Mammary epithelial cell (primary cell): ENCODE measurements at regions of chr18 and their contacts with region 1.

Region 1: DNA sequence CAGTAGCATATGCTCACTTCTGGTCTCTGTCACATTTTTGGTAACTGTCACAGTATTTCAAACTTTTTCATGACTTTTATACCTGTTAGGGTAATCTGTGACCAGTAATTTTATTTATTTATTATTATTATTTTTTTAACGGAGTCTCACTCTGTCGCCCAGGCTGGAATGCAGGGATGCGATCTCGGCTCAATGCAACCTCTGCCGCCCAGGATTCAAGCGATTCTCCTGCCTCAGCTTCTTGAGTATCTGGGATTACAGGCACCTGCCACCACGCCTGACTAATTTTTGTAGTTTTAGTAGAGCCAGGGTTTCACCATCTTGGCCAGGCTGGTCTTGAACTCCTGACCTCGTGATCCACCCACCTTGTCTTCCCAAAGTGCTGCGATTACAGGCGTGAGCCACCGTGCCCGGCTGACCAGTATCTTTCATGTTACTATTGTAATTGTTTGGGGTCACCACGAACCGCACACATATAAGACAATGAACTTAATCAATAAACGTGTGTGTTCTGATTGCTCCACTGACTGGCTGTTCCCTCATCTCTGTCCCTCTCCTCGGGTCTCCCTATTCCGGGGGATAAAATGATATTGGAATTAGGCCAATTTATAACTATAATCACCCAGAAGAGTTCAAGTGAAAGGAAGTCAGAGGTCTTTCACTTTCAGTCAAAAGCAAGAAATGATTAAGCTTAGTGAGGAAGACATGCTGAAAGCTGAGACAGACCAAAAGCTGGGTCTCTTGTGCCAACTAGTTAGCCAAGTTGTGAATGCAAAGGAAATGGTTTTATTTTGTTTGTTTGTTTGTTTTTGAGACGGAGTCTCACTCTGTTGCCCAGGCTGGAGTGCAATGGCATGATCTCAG is 22.9 kb downstream of the TGIF1 start:
- DNase-seq: no peak
- H3K4me3 ChIP-seq: no peak overlapping the region
- H3K27ac ChIP-seq: no peak overlapping the region
- H3K4me1 ChIP-seq: no peaks in the 10 kb centered on the region
- H3K27me3 ChIP-seq: no peaks in the 10 kb centered on the region
- CTCF ChIP-seq: no peak

Region 2: DNA sequence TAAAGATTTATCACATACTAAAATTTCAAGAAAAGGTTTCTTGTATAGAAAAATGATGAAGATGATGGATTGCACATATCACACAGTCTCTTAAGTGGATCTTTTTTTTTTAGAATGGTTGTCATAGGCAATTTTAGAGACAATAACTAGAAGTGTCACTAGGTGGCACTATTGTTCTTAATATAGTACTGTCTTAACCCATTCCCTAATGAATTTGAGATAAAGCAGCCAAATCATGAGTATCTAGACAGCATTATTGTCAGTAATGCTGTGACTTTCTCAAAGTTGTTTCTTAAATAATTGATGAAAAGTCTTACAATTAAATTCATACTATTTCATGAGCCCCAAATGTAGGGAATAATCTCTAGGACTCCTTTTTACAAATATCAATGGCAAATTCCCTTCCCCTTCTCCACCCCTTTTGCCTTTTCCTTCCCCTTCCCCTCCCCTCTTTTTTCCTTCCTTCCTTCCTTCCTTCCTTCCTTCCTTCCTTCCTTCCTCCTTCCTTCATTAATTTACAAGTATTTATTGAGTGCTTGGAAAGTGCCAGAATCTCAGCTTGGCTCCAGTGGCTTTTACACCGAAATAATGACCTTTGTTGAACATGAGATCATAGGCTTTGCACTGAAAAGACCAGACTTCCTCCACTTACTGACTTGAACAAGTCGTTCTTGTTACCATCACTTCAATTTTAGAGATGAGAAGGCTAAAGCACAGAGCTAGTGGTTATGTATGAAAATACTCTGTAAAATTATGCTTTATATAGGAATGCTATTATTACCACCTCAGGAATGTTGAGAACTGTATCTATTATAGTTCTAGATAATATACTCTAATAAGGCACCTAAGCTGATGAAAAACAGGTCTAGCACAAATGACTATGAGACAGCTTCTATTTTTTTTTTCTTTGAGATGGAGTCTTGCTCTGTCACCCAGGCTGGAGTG is 191.2 kb before region 1 on chr18:
- CTCF ChIA-PET with region 1: no interaction called
- dilution Hi-C with region 1: no loop called
- in situ Hi-C with region 1: no loop called
- intact Hi-C with region 1: no loop called
- DNase-seq: peak; percentile 68
- H3K4me3 ChIP-seq: no peak overlapping the region
- H3K27ac ChIP-seq: no peak overlapping the region
- H3K4me1 ChIP-seq: no peaks in the 10 kb centered on the region
- H3K27me3 ChIP-seq: no peaks in the 10 kb centered on the region
- CTCF ChIP-seq: peak; percentile 36 to 53

Region 3: DNA sequence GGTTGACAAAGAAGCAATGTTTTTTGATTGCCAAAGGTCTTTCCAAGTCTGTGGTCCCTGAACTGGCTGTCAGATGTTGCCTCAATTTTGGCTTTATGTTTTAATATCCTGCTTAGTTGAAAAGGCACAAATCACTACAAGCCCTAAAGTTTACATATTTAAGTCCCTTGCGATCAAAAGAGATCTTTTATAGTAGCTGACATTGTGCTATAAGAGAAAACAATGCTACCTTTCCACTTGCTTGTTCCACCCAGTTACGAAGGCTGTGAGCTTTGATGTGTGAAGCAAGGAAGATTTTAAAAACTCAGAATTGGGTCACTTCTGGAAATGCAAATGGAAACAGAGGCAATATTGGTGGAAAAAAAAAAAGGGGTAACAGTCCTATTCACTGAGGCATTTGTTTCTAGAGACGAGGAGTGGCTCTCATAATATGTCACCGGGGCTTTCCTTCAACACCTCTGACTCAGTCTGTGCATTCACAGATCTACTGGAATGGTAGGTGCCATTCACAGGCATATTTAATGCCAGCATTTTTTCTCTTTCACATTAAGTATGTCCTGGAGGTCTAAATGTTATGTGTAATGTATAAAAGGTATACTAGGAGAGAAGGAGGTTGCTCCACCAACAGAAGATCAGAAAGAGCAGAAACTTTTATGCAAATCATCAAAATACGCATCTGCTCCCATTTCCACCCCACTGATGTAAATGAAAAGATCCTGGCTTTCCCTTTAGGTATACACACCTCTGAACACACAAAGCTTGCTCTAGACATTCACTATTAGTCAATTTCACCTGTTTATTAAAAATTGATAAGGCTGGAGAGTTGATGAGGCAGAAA is 68.9 kb after region 1 on chr18:
- CTCF ChIA-PET with region 1: no interaction called
- dilution Hi-C with region 1: no loop called
- in situ Hi-C with region 1: no loop called
- intact Hi-C with region 1: no loop called
- DNase-seq: peak; percentile 54
- H3K4me3 ChIP-seq: no peak overlapping the region
- H3K27ac ChIP-seq: no peak overlapping the region
- H3K4me1 ChIP-seq: peaks cover 14% of the 10 kb centered on the region
- H3K27me3 ChIP-seq: peaks cover 2% of the 10 kb centered on the region
- CTCF ChIP-seq: no peak

Region 4: DNA sequence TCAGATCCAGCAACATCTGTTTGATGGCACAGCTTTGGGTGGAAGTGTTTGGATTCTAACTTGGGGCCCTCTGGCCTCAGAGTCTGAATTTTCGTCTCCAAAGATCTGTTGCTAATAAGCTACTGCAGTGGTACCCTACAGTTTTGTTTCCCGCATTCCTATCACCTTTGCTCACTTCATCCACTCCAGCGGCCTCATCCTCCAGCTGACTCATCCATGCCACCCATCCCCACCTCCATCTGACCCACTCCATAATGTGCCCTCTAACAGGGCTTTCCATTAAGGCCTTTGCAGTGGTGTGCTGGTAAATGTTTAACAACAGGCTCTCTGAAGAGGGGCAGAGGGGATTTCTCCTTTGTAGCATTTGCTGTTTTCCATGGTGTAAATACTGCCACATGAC is 202.5 kb after region 1 on chr18:
- CTCF ChIA-PET with region 1: no interaction called
- dilution Hi-C with region 1: no loop called
- in situ Hi-C with region 1: loop called in 1 of 2 experiments (anchors 10 kb)
- intact Hi-C with region 1: no loop called
- DNase-seq: peak; percentile 59
- H3K4me3 ChIP-seq: no peak overlapping the region
- H3K27ac ChIP-seq: peak overlapping the region; percentile 47
- H3K4me1 ChIP-seq: peaks cover 17% of the 10 kb centered on the region
- H3K27me3 ChIP-seq: no peaks in the 10 kb centered on the region
- CTCF ChIP-seq: no peak